ENCODE measurements at regions of chr9 and their contacts with region 1.

Region 1: GRCh38 chr9:2181792-2182191 is 166.6 kb downstream of the SMARCA2 start:
- DNase-seq: peak; percentile 44 to 57 (median 45)
- H3K4me3 ChIP-seq: no peak overlapping the region
- H3K27ac ChIP-seq: no peak overlapping the region
- H3K4me1 ChIP-seq: peaks cover 0 to 12% (median 0%) of the 10 kb centered on the region in 4 experiments
- H3K27me3 ChIP-seq: no peaks in the 10 kb centered on the region

Region 2: GRCh38 chr9:2132484-2133082 is 49.2 kb before region 1 on chr9:
- CTCF ChIA-PET with region 1: interaction called, 272 read pairs
- POLR2A ChIA-PET with region 1: no interaction called
- DNase-seq: peak; percentile 39 to 65 (median 59)
- H3K4me3 ChIP-seq: no peak overlapping the region
- H3K27ac ChIP-seq: no peak overlapping the region
- H3K4me1 ChIP-seq: peaks cover 0 to 7% (median 0%) of the 10 kb centered on the region in 4 experiments
- H3K27me3 ChIP-seq: no peaks in the 10 kb centered on the region

Region 3: DNA sequence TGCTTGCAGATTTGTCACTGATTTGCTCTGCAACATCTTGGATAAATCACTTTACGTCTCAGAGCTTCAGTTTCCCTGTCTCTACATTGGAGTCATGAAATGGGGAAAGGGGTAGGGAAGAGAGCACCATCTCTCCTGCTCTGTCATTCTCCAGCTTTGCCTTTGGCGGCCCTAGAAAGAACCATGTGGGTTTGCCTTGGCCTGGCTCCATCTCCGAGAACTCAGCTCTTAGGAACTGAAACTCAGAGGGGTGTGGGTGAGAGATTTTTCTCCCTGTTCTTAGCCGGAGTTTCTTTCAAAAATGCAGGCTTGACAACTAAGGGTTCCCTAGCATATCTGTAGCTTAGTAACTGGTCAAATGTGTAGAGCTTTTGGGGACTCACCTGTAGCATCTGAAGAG is 43.1 kb before region 1 on chr9:
- CTCF ChIA-PET with region 1: interaction called, 272 read pairs
- POLR2A ChIA-PET with region 1: no interaction called
- DNase-seq: no peak
- H3K4me3 ChIP-seq: no peak overlapping the region
- H3K27ac ChIP-seq: no peak overlapping the region
- H3K4me1 ChIP-seq: peaks cover 0 to 13% (median 4%) of the 10 kb centered on the region in 4 experiments
- H3K27me3 ChIP-seq: no peaks in the 10 kb centered on the region

Region 4: DNA sequence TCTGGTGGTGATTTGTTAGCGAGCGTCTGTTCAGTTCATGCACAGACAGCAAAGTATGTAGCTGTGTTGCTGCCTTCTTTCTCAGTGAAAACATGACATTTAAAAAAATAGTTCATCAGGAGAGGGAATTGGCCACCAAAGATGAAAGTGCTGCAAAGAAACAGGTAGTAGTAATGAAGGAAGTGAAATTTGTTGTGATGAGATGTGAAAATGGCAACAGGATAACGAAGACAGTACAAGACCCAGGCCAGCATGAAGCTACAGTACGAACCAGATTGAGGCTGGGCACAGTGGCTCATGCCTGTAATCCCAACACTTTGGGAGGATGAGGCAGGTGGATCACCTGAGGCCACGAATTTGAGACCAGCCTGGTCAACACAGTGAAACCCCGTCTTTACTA is 30.6 kb before region 1 on chr9:
- CTCF ChIA-PET with region 1: interaction called, 189 read pairs
- POLR2A ChIA-PET with region 1: no interaction called
- DNase-seq: no peak
- H3K4me3 ChIP-seq: no peak overlapping the region
- H3K27ac ChIP-seq: no peak overlapping the region
- H3K4me1 ChIP-seq: peaks cover 10 to 41% (median 16%) of the 10 kb centered on the region in 4 experiments
- H3K27me3 ChIP-seq: no peaks in the 10 kb centered on the region

Region 5: GRCh38 chr9:2163231-2163885 is 18.4 kb before region 1 on chr9:
- CTCF ChIA-PET with region 1: interaction called, 99 read pairs
- POLR2A ChIA-PET with region 1: no interaction called
- DNase-seq: peak in 1 of 3 donors; percentile 39
- H3K4me3 ChIP-seq: peak overlapping the region in 2 of 7 experiments; percentile 16 to 44
- H3K27ac ChIP-seq: no peak overlapping the region
- H3K4me1 ChIP-seq: peaks cover 29 to 54% (median 42%) of the 10 kb centered on the region in 4 experiments
- H3K27me3 ChIP-seq: no peaks in the 10 kb centered on the region

Region 6: GRCh38 chr9:2193552-2193951 is 11.8 kb after region 1 on chr9:
- CTCF ChIA-PET with region 1: interaction called, 10 read pairs
- POLR2A ChIA-PET with region 1: no interaction called
- DNase-seq: no peak
- H3K4me3 ChIP-seq: no peak overlapping the region
- H3K27ac ChIP-seq: no peak overlapping the region
- H3K4me1 ChIP-seq: no peaks in the 10 kb centered on the region
- H3K27me3 ChIP-seq: no peaks in the 10 kb centered on the region